Activated T-helper 2 cell treated with anti-CD3 and anti-CD28 coated beads, Interferon-gamma antibody, Interleukin-2, Interleukin-4, amounts not matched to agents 10 μg/mL and 5 μg/mL and 100 μg/mL, durations not matched to agents 14 hours and 24 hours and 36 hours (primary cell): ENCODE measurements at regions of chr5 and their contacts with region 1.

Region 1: GRCh38 chr5:42767491-42768105 is 11.0 kb downstream of the CCDC152 start:
- DNase-seq: no peak
- H3K4me3 Mint-ChIP-seq: no peak overlapping the region
- H3K27ac Mint-ChIP-seq: no peak overlapping the region
- H3K4me1 Mint-ChIP-seq: no peaks in the 10 kb centered on the region
- H3K27me3 Mint-ChIP-seq: peaks cover 13% of the 10 kb centered on the region

Region 2: GRCh38 chr5:42005561-42006153 is 761.9 kb before region 1 on chr5:
- intact Hi-C with region 1: loop called (anchors 10 kb)
- DNase-seq: no peak
- H3K4me3 Mint-ChIP-seq: no peak overlapping the region
- H3K27ac Mint-ChIP-seq: no peak overlapping the region
- H3K4me1 Mint-ChIP-seq: no peaks in the 10 kb centered on the region
- H3K27me3 Mint-ChIP-seq: peaks cover 7% of the 10 kb centered on the region

Region 3: GRCh38 chr5:42423285-42424165 is 344.1 kb before region 1 on chr5 and contains the start of gene GHR:
- intact Hi-C with region 1: loop called (anchors 10 kb)
- DNase-seq: no peak
- H3K4me3 Mint-ChIP-seq: no peak within 1 kb of the TSS
- H3K27ac Mint-ChIP-seq: no peak within 1 kb of the TSS
- H3K4me1 Mint-ChIP-seq: no peaks in the 10 kb centered on the region
- H3K27me3 Mint-ChIP-seq: peaks cover 16% of the 10 kb centered on the region
- total RNA-seq, gene GHR: not detected in 2 replicates

Region 4: DNA sequence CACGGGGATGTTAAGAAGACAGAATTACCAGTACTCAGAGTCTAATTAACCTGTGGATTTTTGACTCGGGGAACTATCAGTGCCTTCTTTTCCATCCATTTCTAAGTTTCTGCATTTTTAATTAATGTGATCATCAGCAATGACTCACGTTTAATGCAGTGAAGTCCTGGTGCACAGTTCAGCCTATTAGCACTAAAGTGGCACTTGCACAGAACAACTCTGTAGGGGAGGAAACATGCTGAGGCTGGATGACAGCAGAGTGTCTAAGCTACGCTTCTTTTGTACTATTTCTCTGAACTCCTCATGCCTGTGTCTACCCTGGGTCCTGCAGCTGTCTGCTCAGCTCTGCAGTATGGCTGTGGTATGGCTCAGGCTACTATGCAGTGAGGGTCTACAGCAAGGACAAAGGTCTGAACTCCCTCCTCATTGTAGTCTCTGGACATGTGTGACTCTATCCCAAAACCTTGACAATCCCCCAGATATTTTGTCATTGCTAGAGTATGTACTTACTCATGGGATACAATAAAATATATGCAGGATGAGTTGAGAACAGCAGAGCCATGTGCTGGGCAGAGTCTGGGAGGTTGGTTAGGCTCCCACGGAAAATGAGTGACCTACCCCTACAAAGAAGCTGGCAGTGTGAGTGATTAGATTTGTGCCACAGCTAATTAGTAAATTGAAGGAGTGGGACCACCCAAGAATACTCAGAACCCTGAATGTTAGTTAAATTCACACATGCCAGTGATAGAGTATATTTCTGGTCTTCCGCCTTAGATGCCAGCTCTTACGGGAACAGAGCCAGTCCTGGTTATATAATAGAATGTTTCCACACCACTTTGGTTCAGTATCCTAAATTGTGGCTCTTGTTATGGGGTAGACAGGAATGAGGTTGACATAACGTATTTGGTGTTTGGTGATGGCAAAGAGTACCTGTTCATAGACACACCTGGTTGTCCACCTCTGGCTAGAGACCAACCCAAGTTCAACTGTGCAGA is 196.3 kb before region 1 on chr5:
- intact Hi-C with region 1: no loop called
- DNase-seq: no peak
- H3K4me3 Mint-ChIP-seq: no peak overlapping the region
- H3K27ac Mint-ChIP-seq: no peak overlapping the region
- H3K4me1 Mint-ChIP-seq: no peaks in the 10 kb centered on the region
- H3K27me3 Mint-ChIP-seq: peaks cover 1% of the 10 kb centered on the region

Region 5: GRCh38 chr5:42583322-42583721 is 184.3 kb before region 1 on chr5:
- intact Hi-C with region 1: loop called (anchors 10 kb)
- DNase-seq: peak; percentile 12
- H3K4me3 Mint-ChIP-seq: no peak overlapping the region
- H3K27ac Mint-ChIP-seq: no peak overlapping the region
- H3K4me1 Mint-ChIP-seq: no peaks in the 10 kb centered on the region
- H3K27me3 Mint-ChIP-seq: peaks cover 12% of the 10 kb centered on the region